Prostate gland (tissue), 2 donors: ENCODE measurements at regions of chr1 and their contacts with region 1.

Region 1: DNA sequence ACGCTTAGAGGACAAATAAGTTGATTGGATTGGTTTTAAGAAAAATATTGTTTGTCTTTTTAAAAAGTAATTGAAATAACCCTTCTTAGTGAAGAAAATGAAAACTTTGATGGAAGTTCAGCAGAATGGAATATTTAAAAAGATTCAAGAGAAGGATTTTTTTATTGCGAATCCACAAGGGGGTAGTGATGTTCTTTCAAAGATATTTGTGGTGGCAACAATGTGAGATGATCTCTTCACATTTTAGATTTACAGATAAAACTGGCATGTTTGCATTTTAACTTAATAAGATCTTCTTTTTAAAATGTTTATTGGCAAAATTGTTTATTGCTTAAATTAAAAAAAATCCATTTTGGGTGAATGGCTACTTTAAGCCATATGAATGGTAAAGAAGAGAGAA is 8.9 kb downstream of the CAMTA1 start:
- DNase-seq: no peak
- H3K4me3 ChIP-seq: no peak overlapping the region
- H3K27ac ChIP-seq: no peak overlapping the region
- H3K4me1 ChIP-seq: no peaks in the 10 kb centered on the region
- H3K27me3 ChIP-seq: no peaks in the 10 kb centered on the region
- CTCF ChIP-seq: peak in 3 of 4 experiments; percentile 32 to 70 (median 64)
- POLR2A ChIP-seq: no peak

Region 2: DNA sequence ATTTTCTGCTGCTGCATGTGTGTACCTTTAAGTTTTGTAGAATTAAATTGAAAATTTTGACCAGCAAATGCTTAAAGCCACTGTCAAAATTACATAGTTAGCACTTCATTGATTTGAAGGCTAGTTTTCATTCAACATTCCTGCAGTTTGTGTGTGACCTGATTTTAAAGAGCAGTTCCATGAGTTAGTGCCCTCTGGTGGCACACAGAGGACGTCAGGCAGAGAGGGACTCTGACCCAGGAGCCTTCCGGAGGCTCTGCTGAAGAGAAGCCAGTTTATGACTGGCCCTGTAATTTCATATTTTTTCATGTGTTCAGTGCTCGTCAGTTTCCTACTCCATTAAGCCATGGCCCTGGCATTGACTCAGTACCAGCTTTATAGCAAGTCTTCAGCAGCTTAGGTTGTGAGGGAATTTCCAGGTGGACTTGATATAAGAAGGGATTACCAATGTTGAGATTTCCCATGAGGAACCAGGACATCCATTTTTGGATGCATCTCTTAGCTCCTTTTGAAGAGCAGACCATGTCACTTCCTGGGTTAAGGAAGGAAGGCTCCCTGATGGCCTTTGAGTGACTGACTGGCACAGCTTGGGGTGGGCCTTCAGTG is 95.8 kb after region 1 on chr1:
- intact Hi-C with region 1: loop called (anchors 2 kb)
- DNase-seq: peak; percentile 35
- H3K4me3 ChIP-seq: no peak overlapping the region
- H3K27ac ChIP-seq: no peak overlapping the region
- H3K4me1 ChIP-seq: no peaks in the 10 kb centered on the region
- H3K27me3 ChIP-seq: no peaks in the 10 kb centered on the region
- CTCF ChIP-seq: peak; percentile 39 to 72 (median 66)
- POLR2A ChIP-seq: no peak

Region 3: GRCh38 chr1:7070389-7071029 is 276.3 kb after region 1 on chr1:
- intact Hi-C with region 1: loop called (anchors 5 kb)
- DNase-seq: peak; percentile 58
- H3K4me3 ChIP-seq: peak overlapping the region in 1 of 2 donors; percentile 6
- H3K27ac ChIP-seq: no peak overlapping the region
- H3K4me1 ChIP-seq: no peaks in the 10 kb centered on the region
- H3K27me3 ChIP-seq: no peaks in the 10 kb centered on the region
- CTCF ChIP-seq: peak; percentile 70 to 80 (median 74)
- POLR2A ChIP-seq: no peak

Region 4: GRCh38 chr1:7218210-7218832 is 424.2 kb after region 1 on chr1:
- intact Hi-C with region 1: loop called (anchors 5 kb)
- DNase-seq: no peak
- H3K4me3 ChIP-seq: no peak overlapping the region
- H3K27ac ChIP-seq: no peak overlapping the region
- H3K4me1 ChIP-seq: no peaks in the 10 kb centered on the region
- H3K27me3 ChIP-seq: no peaks in the 10 kb centered on the region
- CTCF ChIP-seq: peak in 3 of 4 experiments; percentile 54 to 72 (median 62)
- POLR2A ChIP-seq: no peak

Region 5: GRCh38 chr1:7646981-7647901 is 853.1 kb after region 1 on chr1:
- intact Hi-C with region 1: loop called (anchors 10 kb)
- DNase-seq: peak; percentile 54
- H3K4me3 ChIP-seq: no peak overlapping the region
- H3K27ac ChIP-seq: no peak overlapping the region
- H3K4me1 ChIP-seq: no peaks in the 10 kb centered on the region
- H3K27me3 ChIP-seq: no peaks in the 10 kb centered on the region
- CTCF ChIP-seq: peak; percentile 88 to 95 (median 94)
- POLR2A ChIP-seq: no peak